PC-3 (cell line): ENCODE measurements at regions of chr5 and their contacts with region 1.

Region 1: DNA sequence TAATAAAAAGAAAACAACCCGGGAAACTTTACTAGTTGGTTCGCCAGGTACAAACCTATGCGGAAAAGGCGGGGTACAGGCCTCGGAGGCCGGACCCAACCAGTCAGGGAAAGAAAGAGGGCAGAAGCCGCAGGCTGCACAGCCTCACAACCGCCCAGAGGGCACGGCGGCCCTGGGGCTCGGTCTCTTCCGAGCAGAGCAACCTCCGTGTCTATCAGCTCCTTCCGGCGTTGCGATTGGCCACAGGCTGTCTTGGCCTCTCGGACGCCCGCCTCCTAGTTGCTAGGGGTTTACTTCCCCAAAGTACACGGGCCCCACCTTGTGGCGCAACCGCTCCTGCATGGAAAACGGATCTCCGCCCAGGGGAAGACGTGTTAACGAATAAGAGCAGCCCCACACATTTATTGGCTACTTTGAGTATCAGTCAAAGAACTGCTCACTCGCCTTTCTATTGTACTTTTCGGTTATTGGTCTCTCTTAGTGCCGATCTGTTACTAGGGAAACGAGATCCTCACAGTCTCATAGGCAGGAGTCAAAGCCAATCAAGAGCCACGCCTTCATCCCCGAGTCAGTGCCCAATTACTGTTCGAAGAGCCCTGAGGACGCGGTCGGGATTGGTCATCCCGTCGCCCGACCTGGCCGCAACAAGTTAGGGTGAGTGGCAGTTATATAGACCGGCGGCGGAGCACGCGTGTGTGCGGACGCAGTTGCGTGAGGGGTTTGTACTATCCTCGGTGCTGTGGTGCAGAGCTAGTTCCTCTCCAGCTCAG is at the start of gene G3BP1:
- DNase-seq: peak; percentile 100
- ATAC-seq: peak; percentile 86
- H3K4me3 ChIP-seq: peak within 1 kb of the TSS; percentile 85
- H3K27ac ChIP-seq: peak within 1 kb of the TSS; percentile 91
- H3K4me1 ChIP-seq: peaks cover 28% of the 10 kb centered on the region
- H3K27me3 ChIP-seq: no peaks in the 10 kb centered on the region
- CTCF ChIP-seq: peak; percentile 69
- total RNA-seq, gene G3BP1: 133 and 157 TPM in 2 replicates

Region 2: GRCh38 chr5:151659001-151659754 is 112.3 kb before region 1 on chr5:
- CTCF ChIA-PET with region 1: interaction called, 22 read pairs
- POLR2A ChIA-PET with region 1: interaction called, 5 read pairs
- intact Hi-C with region 1: loop called (anchors 1 kb)
- DNase-seq: peak; percentile 79
- ATAC-seq: peak; percentile 82
- H3K4me3 ChIP-seq: no peak overlapping the region
- H3K27ac ChIP-seq: no peak overlapping the region
- H3K4me1 ChIP-seq: peaks cover 10% of the 10 kb centered on the region
- H3K27me3 ChIP-seq: no peaks in the 10 kb centered on the region
- CTCF ChIP-seq: peak; percentile 90

Region 3: DNA sequence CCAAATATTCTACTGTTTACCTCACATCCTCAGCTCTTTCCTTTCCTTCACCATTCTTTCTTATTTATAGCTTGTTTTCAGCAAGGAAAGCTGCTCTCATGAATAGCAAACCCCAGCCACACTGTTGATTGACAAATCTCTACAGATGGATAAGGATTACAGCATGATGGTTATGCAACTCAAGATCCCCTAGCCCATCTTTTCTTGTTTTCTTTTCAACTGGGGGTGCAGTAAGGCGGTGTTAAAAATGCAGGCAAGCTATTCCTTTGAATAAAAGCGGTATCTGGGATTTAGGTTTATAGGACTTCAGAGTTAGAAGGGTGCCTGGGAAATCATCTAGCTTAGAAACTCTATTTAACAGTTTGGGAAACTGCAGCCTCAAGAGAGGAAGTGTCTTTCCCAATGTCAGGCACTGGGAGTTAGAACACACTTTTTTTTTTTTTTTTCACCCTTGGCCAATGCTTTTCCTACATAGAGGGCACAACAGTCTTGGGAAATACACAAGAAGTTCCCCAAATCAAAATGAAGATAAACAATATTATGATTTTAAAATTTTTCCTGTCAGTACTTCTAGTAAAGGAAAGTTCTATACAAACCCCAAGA is 87.4 kb before region 1 on chr5:
- CTCF ChIA-PET with region 1: no interaction called
- POLR2A ChIA-PET with region 1: interaction called, 10 read pairs
- intact Hi-C with region 1: no loop called
- DNase-seq: no peak
- ATAC-seq: no peak
- H3K4me3 ChIP-seq: no peak overlapping the region
- H3K27ac ChIP-seq: no peak overlapping the region
- H3K4me1 ChIP-seq: peaks cover 9% of the 10 kb centered on the region
- H3K27me3 ChIP-seq: no peaks in the 10 kb centered on the region
- CTCF ChIP-seq: no peak

Region 4: GRCh38 chr5:151758430-151759241 is 12.8 kb before region 1 on chr5 and contains the start of gene ATOX1:
- CTCF ChIA-PET with region 1: no interaction called
- POLR2A ChIA-PET with region 1: no interaction called
- intact Hi-C with region 1: loop called (anchors 1 kb)
- DNase-seq: peak; percentile 92
- ATAC-seq: peak; percentile 97
- H3K4me3 ChIP-seq: peak within 1 kb of the TSS; percentile 91
- H3K27ac ChIP-seq: peak within 1 kb of the TSS; percentile 42
- H3K4me1 ChIP-seq: peaks cover 24% of the 10 kb centered on the region
- H3K27me3 ChIP-seq: no peaks in the 10 kb centered on the region
- CTCF ChIP-seq: 0 out of 2 replicates have a peak, but pooled peaks have one; percentile 13
- total RNA-seq, gene ATOX1: 81.4 and 122 TPM in 2 replicates

Region 5: GRCh38 chr5:151799407-151799806 is 28.0 kb after region 1 on chr5:
- CTCF ChIA-PET with region 1: no interaction called
- POLR2A ChIA-PET with region 1: interaction called, 16 read pairs
- intact Hi-C with region 1: no loop called
- DNase-seq: peak; percentile 26
- ATAC-seq: peak; percentile 71
- H3K4me3 ChIP-seq: no peak overlapping the region
- H3K27ac ChIP-seq: no peak overlapping the region
- H3K4me1 ChIP-seq: no peaks in the 10 kb centered on the region
- H3K27me3 ChIP-seq: no peaks in the 10 kb centered on the region
- CTCF ChIP-seq: no peak